Aorta (tissue), 5 donors: ENCODE measurements at regions of chr3 and their contacts with region 1.

Region 1: GRCh38 chr3:142828703-142829305 is 60.1 kb downstream of the PCOLCE2 start:
- DNase-seq: peak; percentile 86 to 93
- ATAC-seq: peak; percentile 92
- H3K4me3 ChIP-seq: no peak overlapping the region
- H3K27ac ChIP-seq: no peak overlapping the region
- H3K4me1 ChIP-seq: no peaks in the 10 kb centered on the region
- H3K27me3 ChIP-seq: no peaks in the 10 kb centered on the region

Region 2: DNA sequence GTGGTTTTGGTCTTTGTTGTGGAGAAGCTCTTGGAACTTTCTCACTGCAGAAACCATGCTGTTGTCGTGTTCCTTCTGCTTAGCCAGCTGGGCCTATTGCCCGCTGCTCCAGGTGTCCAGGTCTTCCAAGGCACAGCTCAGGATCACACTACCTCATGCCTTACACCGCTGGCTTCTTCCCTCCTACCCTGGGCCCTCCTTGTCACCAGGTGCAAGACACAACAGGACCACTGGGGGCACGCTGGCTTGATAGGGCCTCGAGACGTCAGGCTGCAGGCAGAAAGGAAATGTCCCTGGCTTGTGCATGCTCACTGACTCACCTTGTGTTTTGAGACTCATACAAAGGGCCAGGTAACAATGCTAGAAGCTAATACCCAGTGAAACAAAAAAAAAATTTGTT is 102.4 kb after region 1 on chr3:
- intact Hi-C with region 1: loop called in 1 of 2 experiments (anchors 5 kb)
- DNase-seq: no peak
- ATAC-seq: no peak
- H3K4me3 ChIP-seq: no peak overlapping the region
- H3K27ac ChIP-seq: no peak overlapping the region
- H3K4me1 ChIP-seq: no peaks in the 10 kb centered on the region
- H3K27me3 ChIP-seq: no peaks in the 10 kb centered on the region

Region 3: DNA sequence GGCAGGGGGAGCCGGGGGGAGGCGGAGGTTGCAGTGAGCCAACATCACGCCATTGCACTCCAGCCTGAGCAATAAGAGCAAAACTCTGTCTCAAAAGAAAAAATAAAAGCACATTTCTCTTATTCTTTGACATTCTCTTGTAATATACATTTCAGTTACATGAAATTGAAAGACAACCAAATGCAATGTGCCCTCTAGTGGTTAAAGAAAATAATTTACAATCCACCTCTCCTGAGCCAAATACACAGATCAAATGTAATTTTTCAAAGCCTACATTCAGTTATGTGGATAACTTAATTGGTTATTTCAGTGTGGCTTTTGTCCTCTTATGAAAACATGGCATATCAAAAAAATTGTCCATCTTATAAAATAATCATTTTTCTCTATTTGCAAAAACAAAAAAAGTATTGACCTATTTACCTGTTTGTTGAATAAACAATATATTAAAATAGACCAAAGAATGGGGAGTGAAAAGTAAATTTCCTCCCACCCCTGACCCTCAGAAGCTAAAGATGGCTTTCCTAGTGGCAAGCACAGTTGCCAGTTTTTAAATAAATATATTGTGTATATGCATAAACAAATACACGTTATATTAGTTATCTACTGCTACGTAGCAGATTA is 158.4 kb after region 1 on chr3:
- intact Hi-C with region 1: loop called (anchors 2 kb)
- DNase-seq: no peak
- ATAC-seq: no peak
- H3K4me3 ChIP-seq: no peak overlapping the region
- H3K27ac ChIP-seq: no peak overlapping the region
- H3K4me1 ChIP-seq: no peaks in the 10 kb centered on the region
- H3K27me3 ChIP-seq: no peaks in the 10 kb centered on the region